Panc1 (cell line): ENCODE measurements at regions of chr12 and their contacts with region 1.

Region 1: GRCh38 chr12:30595742-30596141 is 99.9 kb downstream of the IPO8 start:
- DNase-seq: no peak
- ATAC-seq: no peak
- H3K4me3 ChIP-seq: no peak overlapping the region
- H3K27ac ChIP-seq: no peak overlapping the region
- H3K4me1 ChIP-seq: no peaks in the 10 kb centered on the region
- H3K27me3 ChIP-seq: no peaks in the 10 kb centered on the region
- CTCF ChIP-seq: no peak

Region 2: GRCh38 chr12:30420561-30420960 is 175.2 kb before region 1 on chr12:
- CTCF ChIA-PET with region 1: no interaction called
- POLR2A ChIA-PET with region 1: no interaction called
- in situ Hi-C with region 1: no loop called
- intact Hi-C with region 1: no loop called
- DNase-seq: no peak
- ATAC-seq: no peak
- H3K4me3 ChIP-seq: no peak overlapping the region
- H3K27ac ChIP-seq: no peak overlapping the region
- H3K4me1 ChIP-seq: no peaks in the 10 kb centered on the region
- H3K27me3 ChIP-seq: no peaks in the 10 kb centered on the region
- CTCF ChIP-seq: no peak

Region 3: DNA sequence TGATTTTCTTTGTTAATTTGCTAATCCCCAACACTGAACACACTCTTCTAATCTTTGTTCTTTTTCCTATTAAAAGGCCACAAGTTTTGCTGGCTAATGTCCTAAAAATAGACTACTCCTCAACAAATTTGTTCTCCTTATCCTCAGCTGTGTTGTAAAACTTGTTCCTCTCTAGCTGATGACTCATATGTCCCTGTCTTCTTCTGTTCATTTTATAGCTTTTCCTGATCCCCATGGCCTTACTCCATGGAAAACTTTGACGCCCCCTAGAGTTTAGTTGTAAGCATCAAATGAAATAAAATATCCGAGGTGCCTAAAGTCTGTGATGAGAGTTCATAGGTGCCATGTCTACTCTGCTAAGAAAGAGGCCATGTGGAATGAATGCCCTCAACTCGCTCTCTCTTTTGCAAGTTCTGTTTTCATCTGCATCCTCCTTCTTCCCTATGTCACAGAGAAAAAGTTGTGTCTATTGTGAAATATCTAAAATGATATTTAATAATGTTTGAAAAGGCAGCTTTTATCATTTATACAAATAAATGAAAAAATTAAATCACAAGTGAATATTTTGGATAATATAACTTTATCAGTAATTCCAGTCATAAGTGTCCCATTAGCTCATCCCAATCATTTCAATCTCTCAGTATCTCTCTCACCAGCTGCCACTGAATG is 138.0 kb before region 1 on chr12:
- CTCF ChIA-PET with region 1: no interaction called
- POLR2A ChIA-PET with region 1: no interaction called
- in situ Hi-C with region 1: no loop called
- intact Hi-C with region 1: no loop called
- DNase-seq: no peak
- ATAC-seq: no peak
- H3K4me3 ChIP-seq: no peak overlapping the region
- H3K27ac ChIP-seq: no peak overlapping the region
- H3K4me1 ChIP-seq: no peaks in the 10 kb centered on the region
- H3K27me3 ChIP-seq: no peaks in the 10 kb centered on the region
- CTCF ChIP-seq: peak; percentile 31; the same call in 1 of the 2 replicates

Region 4: GRCh38 chr12:30582943-30583342 is 12.8 kb before region 1 on chr12:
- CTCF ChIA-PET with region 1: no interaction called
- POLR2A ChIA-PET with region 1: interaction called, 11 read pairs
- in situ Hi-C with region 1: no loop called
- intact Hi-C with region 1: no loop called
- DNase-seq: no peak
- ATAC-seq: no peak
- H3K4me3 ChIP-seq: no peak overlapping the region
- H3K27ac ChIP-seq: no peak overlapping the region
- H3K4me1 ChIP-seq: no peaks in the 10 kb centered on the region
- H3K27me3 ChIP-seq: peaks cover 3% of the 10 kb centered on the region; the same call in 1 of the 2 replicates
- CTCF ChIP-seq: no peak

Region 5: DNA sequence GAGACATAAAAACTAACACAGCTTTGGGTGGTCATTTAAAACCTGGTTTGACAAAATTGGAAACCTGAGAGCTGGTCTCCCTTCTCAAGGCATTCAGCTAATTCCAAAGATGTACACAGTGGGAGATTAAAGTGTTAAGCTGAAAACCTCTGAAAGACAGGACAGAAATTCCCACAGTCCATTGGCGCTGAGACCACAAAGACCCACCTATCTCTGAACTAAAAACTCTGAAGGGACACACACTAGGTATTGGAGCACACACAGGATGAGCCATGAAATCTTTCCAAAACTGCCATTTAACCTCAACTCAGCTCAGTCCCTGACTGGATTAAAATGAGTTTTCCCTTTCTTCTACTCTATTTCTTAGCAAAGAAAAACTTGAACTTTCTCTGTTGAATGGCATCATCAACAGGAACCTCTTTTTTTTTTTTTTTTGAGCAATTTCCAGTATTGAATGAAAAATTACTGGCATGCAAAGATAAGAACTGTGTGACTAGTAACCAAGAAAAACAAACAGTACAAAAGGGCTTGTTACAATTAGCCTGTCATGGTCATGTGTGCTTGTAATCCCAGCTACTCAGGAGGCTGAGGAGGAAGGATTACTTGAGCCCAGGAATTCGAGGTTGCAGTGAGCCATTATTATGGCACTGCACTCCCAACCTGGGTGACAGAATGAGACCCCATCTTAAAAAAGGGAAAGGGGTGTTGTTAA is 17.5 kb after region 1 on chr12:
- CTCF ChIA-PET with region 1: no interaction called
- POLR2A ChIA-PET with region 1: no interaction called
- in situ Hi-C with region 1: no loop called
- intact Hi-C with region 1: no loop called
- DNase-seq: no peak
- ATAC-seq: no peak
- H3K4me3 ChIP-seq: no peak overlapping the region
- H3K27ac ChIP-seq: no peak overlapping the region
- H3K4me1 ChIP-seq: no peaks in the 10 kb centered on the region
- H3K27me3 ChIP-seq: peaks cover 7% of the 10 kb centered on the region; the same call in 1 of the 2 replicates
- CTCF ChIP-seq: no peak

Region 6: GRCh38 chr12:30754709-30755394 is 159.1 kb after region 1 on chr12 and contains the start of gene CAPRIN2:
- CTCF ChIA-PET with region 1: no interaction called
- POLR2A ChIA-PET with region 1: no interaction called
- in situ Hi-C with region 1: no loop called
- intact Hi-C with region 1: no loop called
- DNase-seq: peak; percentile 83
- ATAC-seq: peak; percentile 98
- H3K4me3 ChIP-seq: peak within 1 kb of the TSS; percentile 88 to 93
- H3K27ac ChIP-seq: peak within 1 kb of the TSS; percentile 98
- H3K4me1 ChIP-seq: peaks cover 35% of the 10 kb centered on the region
- H3K27me3 ChIP-seq: no peaks in the 10 kb centered on the region
- CTCF ChIP-seq: peak; percentile 83
- total RNA-seq, gene CAPRIN2: 28.6 TPM